ENCODE measurements at regions of chr15 and their contacts with region 1.

Region 1: DNA sequence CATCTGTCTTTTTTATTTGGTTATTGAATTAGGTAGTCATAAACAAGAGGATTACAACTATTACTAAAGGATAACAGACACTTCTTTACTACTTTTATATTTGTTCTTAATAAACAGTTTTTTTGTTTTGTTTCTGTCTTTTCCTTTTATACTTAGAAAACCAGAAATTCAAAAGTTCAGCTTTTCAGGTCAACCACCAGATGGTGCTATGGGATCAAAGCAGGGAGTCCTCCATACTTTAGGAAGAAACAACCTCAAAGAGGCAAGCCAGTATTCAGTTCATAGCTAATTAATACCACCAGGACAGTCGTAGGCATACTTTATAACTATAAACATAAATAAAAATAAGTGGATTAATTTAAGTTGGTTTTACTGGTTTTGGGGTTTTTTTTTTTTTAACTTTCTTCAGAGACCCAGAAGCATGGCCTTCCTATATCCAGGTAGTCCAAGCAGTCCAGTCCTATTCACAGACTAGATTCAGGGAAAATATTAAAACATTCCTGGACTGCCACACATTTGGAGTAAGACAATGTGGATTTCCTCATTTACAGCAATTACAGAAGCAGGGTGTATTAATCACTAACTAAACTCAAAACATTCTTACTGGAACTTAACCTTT is 16.0 kb upstream of the EID1 start:
- DNase-seq: peak; percentile 61 to 72 (median 65)
- H3K4me3 ChIP-seq: no peak overlapping the region
- H3K4me3 Mint-ChIP-seq: no peak overlapping the region
- H3K27ac ChIP-seq: no peak overlapping the region
- H3K27ac Mint-ChIP-seq: no peak overlapping the region
- H3K4me1 ChIP-seq: no peaks in the 10 kb centered on the region
- H3K4me1 Mint-ChIP-seq: peaks cover 0 to 4% (median under 1%) of the 10 kb centered on the region in 4 donors
- H3K27me3 ChIP-seq: no peaks in the 10 kb centered on the region
- H3K27me3 Mint-ChIP-seq: peaks cover 3 to 4% of the 10 kb centered on the region in 2 donors

Region 2: DNA sequence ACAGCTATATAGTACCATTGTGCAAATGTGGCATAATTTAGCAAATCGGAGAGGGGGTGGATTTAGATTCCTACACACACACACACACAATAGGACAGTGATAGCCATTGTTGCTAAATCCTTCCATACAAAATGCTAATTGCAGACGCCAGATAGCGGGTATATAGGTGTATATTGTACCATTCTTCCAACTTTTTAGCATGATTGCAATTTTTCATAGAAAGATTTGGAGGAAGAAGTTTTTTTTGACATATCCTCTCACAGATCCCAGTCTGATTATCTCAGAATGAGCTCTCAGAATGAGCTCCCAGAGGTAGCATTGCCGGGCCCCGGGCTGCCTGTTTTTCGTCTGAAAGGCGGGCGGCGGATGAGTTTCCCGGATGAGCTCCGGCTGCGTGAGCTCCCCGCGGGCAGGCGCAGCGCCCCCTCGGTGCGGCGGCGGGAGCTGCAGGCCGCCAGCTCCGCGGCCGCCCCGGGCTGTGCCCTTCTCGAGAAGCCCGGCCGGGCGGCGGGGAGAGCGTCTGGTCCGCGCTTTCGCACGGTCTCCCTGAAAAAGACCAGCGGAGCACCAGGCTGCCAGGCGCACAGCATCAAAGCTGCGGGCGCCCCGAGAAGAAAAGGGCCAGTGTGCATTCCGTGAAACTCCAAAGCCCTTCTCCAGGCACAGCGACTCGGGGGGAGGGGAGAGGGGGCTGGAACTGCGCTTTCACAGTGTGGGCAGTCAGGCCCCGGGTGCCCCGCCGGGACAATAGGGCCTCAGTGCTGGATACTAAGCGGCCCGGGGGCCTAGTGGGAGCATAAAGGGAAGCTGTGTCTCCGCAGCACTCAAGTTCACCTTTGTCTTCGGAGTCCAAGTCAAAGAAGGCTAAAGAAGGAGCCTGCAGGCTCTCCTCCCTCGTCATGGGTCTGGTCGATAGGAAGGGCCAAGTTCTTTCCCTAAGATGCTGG is 113.8 kb after region 1 on chr15:
- CTCF ChIA-PET with region 1: interaction called, 39 read pairs
- POLR2A ChIA-PET with region 1: interaction called, 3 read pairs
- intact Hi-C with region 1: loop called (anchors 1 kb)
- DNase-seq: peak; percentile 60 to 74 (median 69)
- H3K4me3 ChIP-seq: peak overlapping the region in 1 of 2 donors; percentile 28
- H3K4me3 Mint-ChIP-seq: peak overlapping the region; percentile 40 to 76 (median 68)
- H3K27ac ChIP-seq: no peak overlapping the region
- H3K27ac Mint-ChIP-seq: no peak overlapping the region
- H3K4me1 ChIP-seq: peaks cover 9% of the 10 kb centered on the region
- H3K4me1 Mint-ChIP-seq: peaks cover 0 to 9% (median 3%) of the 10 kb centered on the region in 4 donors
- H3K27me3 ChIP-seq: no peaks in the 10 kb centered on the region
- H3K27me3 Mint-ChIP-seq: peaks cover 9 to 26% of the 10 kb centered on the region in 2 donors

Region 3: DNA sequence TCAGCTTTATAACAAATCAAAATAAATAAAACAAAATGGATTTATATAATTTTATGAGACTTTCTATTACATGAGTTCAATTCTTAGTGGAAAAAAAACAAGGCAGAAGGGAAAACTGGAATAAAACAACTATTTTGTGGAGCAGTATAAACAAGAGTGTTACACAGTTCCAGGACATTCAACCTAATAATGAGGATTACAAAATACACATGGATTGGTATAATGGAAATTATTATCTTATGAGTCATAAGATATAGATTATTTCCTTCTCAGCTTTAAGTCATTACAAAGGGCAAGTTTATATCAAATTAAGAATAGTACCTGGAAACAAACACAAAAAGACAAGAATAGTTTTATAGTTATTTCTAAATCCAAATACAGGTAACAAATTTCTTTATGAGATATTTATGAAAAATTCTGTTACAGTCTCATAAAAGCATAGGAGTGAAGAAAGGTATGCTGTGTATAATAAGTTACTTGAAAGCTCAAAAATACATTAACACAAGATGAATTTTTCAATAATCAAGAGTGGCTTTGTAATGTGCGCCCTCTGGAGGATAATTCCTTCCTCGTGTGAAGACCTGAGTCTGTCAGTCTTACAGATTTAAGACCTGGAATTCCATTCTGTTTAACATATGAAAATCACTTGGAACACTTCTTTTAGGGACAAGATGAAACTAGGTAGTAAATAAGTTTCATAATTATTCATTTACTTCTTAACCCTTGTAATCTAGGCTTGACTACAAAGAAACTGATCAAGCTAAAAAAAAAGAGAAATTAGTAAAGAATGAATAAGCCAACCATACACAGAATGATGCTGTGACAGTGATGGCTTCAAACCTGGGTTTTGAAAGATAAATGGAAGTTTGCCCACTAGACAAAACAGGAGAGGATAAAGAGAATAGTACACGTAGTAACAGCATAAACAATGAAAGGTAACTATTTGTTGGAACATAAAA is 284.0 kb after region 1 on chr15:
- CTCF ChIA-PET with region 1: interaction called, 50 read pairs
- POLR2A ChIA-PET with region 1: interaction called, 3 read pairs
- intact Hi-C with region 1: loop called (anchors 1 kb)
- DNase-seq: peak in 4 of 5 donors; percentile 17 to 32 (median 24)
- H3K4me3 ChIP-seq: no peak overlapping the region
- H3K4me3 Mint-ChIP-seq: peak overlapping the region in 2 of 8 donors; percentile 9 to 24
- H3K27ac ChIP-seq: no peak overlapping the region
- H3K27ac Mint-ChIP-seq: peak overlapping the region in 3 of 7 donors; percentile 1 to 6 (median 4)
- H3K4me1 ChIP-seq: peaks cover 45% of the 10 kb centered on the region
- H3K4me1 Mint-ChIP-seq: peaks cover 35 to 53% (median 44%) of the 10 kb centered on the region in 4 donors
- H3K27me3 ChIP-seq: no peaks in the 10 kb centered on the region
- H3K27me3 Mint-ChIP-seq: no peaks in the 10 kb centered on the region

Region 4: GRCh38 chr15:49421991-49422390 is 560.1 kb after region 1 on chr15:
- CTCF ChIA-PET with region 1: interaction called, 76 read pairs
- POLR2A ChIA-PET with region 1: interaction called, 3 read pairs
- intact Hi-C with region 1: no loop called
- DNase-seq: peak; percentile 36 to 56 (median 50)
- H3K4me3 ChIP-seq: no peak overlapping the region
- H3K4me3 Mint-ChIP-seq: peak overlapping the region in 6 of 8 donors; percentile 3 to 69 (median 61)
- H3K27ac ChIP-seq: no peak overlapping the region
- H3K27ac Mint-ChIP-seq: peak overlapping the region in 3 of 7 donors; percentile 79 to 92 (median 90)
- H3K4me1 ChIP-seq: no peaks in the 10 kb centered on the region
- H3K4me1 Mint-ChIP-seq: peaks cover 3 to 4% (median 4%) of the 10 kb centered on the region in 4 donors
- H3K27me3 ChIP-seq: peaks cover 4% of the 10 kb centered on the region
- H3K27me3 Mint-ChIP-seq: peaks cover 3 to 6% of the 10 kb centered on the region in 2 donors

Region 5: DNA sequence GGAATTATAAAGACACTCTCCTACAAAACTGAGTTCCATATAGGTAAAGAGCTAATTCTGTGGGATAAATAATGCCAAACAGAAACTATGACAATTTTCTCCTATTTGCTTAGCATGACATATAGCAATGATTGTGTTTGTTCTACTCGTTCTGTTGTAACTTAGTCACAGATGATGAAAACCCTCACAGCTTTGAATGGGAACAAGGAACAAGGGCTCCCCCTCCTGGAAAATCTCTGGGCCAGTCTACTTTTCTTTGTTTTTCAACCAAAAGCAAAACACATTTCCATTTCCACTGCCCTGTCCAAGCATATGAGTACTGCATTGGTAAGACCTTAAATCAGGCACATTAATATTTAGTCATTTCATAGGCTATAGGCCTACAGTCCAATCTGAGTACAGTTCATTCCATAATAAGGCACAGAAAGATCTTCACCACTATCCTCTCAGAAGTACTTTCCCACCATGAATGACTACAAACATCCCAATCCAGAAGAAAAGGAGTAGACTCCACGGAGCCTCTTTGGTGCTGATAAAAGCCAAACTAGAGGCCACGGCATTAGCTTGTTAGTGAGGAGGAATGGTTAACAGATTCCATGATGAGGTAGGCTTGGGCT is 1190.0 kb after region 1 on chr15:
- CTCF ChIA-PET with region 1: no interaction called
- POLR2A ChIA-PET with region 1: interaction called, 3 read pairs
- intact Hi-C with region 1: loop called (anchors 5 kb)
- DNase-seq: peak in 1 of 5 donors; percentile 4
- H3K4me3 ChIP-seq: no peak overlapping the region
- H3K4me3 Mint-ChIP-seq: no peak overlapping the region
- H3K27ac ChIP-seq: no peak overlapping the region
- H3K27ac Mint-ChIP-seq: no peak overlapping the region
- H3K4me1 ChIP-seq: no peaks in the 10 kb centered on the region
- H3K4me1 Mint-ChIP-seq: no peaks in the 10 kb centered on the region
- H3K27me3 ChIP-seq: no peaks in the 10 kb centered on the region
- H3K27me3 Mint-ChIP-seq: peaks cover 6 to 8% of the 10 kb centered on the region in 2 donors

Region 6: DNA sequence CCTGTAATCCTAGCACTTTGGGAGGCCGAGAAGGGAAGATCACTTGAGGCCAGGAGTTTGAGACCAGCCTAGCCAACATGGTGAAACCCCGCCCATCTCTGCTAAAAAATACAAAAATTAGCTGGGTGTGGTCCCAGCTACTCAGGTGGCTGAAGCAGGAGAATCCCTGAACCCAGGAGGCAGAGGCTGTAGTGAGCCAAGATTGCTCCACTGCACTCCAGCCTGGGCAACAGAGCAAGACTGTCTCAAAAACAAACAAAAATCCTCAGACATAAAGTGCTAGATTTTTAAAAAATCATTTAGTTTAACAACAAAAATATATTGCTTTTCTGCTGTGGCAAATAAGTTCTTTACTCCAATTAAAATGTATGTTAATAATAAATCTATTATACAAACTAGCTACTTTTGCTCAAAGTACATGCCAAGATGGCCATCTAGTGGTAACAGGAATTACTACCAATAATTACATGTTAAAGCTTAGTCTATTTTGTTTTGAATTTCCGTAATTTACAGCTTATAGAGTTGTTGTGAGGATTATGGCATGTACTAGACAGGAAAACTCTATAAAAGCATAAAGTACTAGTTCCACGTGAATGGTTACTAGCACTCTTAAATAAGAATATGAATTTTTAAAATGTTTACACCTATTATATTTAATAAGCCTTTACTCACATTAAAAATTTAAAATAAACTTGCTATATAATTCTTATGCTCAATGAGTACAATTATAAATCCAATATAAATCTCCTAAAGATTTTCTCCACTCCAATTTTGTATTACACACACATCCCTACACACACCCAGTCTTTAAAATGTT is 1454.1 kb after region 1 on chr15:
- CTCF ChIA-PET with region 1: interaction called, 5 read pairs
- POLR2A ChIA-PET with region 1: no interaction called
- intact Hi-C with region 1: loop called (anchors 1 kb)
- DNase-seq: peak in 4 of 5 donors; percentile 35 to 50 (median 42)
- H3K4me3 ChIP-seq: no peak overlapping the region
- H3K4me3 Mint-ChIP-seq: no peak overlapping the region
- H3K27ac ChIP-seq: no peak overlapping the region
- H3K27ac Mint-ChIP-seq: no peak overlapping the region
- H3K4me1 ChIP-seq: peaks cover 17% of the 10 kb centered on the region
- H3K4me1 Mint-ChIP-seq: peaks cover 15 to 21% (median 17%) of the 10 kb centered on the region in 4 donors
- H3K27me3 ChIP-seq: no peaks in the 10 kb centered on the region
- H3K27me3 Mint-ChIP-seq: no peaks in the 10 kb centered on the region

Measured in CD4-positive, alpha-beta memory T cell (primary cell).